Psoas muscle (tissue), 8 donors: ENCODE measurements at regions of chr12 and their contacts with region 1.

Region 1: DNA sequence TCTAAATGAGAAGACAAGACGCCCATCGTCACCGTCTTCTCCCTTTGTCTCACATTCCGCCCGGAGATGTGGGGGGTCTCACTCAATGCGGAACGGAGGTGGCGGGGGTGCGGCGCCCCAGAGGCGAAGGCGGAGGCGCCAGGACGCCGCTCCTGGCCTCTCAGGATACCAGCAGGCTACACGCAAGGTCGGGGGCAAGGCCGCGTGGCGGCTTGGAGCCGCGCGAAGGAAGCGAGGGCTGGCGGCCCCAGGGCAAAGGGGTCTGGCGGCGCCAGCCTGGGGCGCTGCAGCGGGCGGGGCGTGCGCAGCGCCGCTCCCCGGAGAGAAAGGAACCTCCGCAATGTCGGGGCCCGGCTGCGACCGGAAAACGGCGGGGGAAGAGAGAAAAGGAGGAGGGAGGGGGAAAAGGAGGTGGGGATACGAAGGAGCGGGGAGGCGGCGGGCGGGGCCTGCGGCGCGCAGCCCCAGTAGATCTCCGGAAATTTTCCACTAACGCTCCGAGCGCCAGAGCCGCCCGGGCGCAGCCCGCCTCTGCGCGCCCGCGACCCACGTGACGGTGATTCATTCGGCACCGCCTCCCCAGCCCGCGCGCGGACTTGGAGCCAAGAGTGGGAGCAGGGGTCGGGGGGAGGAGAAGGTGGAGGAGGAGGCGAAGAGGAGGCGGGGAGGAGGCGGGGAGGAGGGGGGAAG is 10.5 kb upstream of the SLC38A2 start:
- DNase-seq: peak; percentile 97 to 99
- ATAC-seq: peak; percentile 86 to 92 (median 89)
- H3K4me3 ChIP-seq: peak overlapping the region; percentile 86
- H3K27ac ChIP-seq: peak overlapping the region; percentile 98
- H3K4me1 ChIP-seq: peaks cover 41% of the 10 kb centered on the region
- H3K27me3 ChIP-seq: no peaks in the 10 kb centered on the region
- CTCF ChIP-seq: no peak

Region 2: GRCh38 chr12:45762185-45763110 is 620.7 kb before region 1 on chr12:
- intact Hi-C with region 1: no loop called
- DNase-seq: no peak
- ATAC-seq: peak in 3 of 4 donors; percentile 48 to 68 (median 66)
- H3K4me3 ChIP-seq: no peak overlapping the region
- H3K27ac ChIP-seq: no peak overlapping the region
- H3K4me1 ChIP-seq: peaks cover 14% of the 10 kb centered on the region
- H3K27me3 ChIP-seq: no peaks in the 10 kb centered on the region
- CTCF ChIP-seq: peak; percentile 63

Region 3: GRCh38 chr12:46260151-46260918 is 122.8 kb before region 1 on chr12:
- intact Hi-C with region 1: no loop called
- DNase-seq: no peak
- ATAC-seq: peak in 3 of 4 donors; percentile 35 to 51 (median 38)
- H3K4me3 ChIP-seq: no peak overlapping the region
- H3K27ac ChIP-seq: peak overlapping the region; percentile 13
- H3K4me1 ChIP-seq: peaks cover 23% of the 10 kb centered on the region
- H3K27me3 ChIP-seq: no peaks in the 10 kb centered on the region
- CTCF ChIP-seq: no peak

Region 4: GRCh38 chr12:46372544-46373110 is 10.5 kb before region 1 on chr12 and contains the start of gene SLC38A2:
- intact Hi-C with region 1: loop called in 1 of 2 experiments (anchors 1 kb)
- DNase-seq: peak; percentile 97 to 99
- ATAC-seq: peak; percentile 88 to 93 (median 90)
- H3K4me3 ChIP-seq: peak within 1 kb of the TSS; percentile 94
- H3K27ac ChIP-seq: peak within 1 kb of the TSS; percentile 99
- H3K4me1 ChIP-seq: peaks cover 40% of the 10 kb centered on the region
- H3K27me3 ChIP-seq: no peaks in the 10 kb centered on the region
- CTCF ChIP-seq: no peak
- total RNA-seq, gene SLC38A2: 287 to 428 (median 331) TPM

Region 5: GRCh38 chr12:46406352-46407027 is 23.4 kb after region 1 on chr12:
- intact Hi-C with region 1: no loop called
- DNase-seq: no peak
- ATAC-seq: no peak
- H3K4me3 ChIP-seq: no peak overlapping the region
- H3K27ac ChIP-seq: no peak overlapping the region
- H3K4me1 ChIP-seq: peaks cover 62% of the 10 kb centered on the region
- H3K27me3 ChIP-seq: no peaks in the 10 kb centered on the region
- CTCF ChIP-seq: no peak

Region 6: GRCh38 chr12:46450279-46450748 is 67.2 kb after region 1 on chr12:
- intact Hi-C with region 1: loop called in 1 of 2 experiments (anchors 5 kb)
- DNase-seq: peak; percentile 58 to 86
- ATAC-seq: peak; percentile 55 to 91 (median 82)
- H3K4me3 ChIP-seq: no peak overlapping the region
- H3K27ac ChIP-seq: peak overlapping the region; percentile 74
- H3K4me1 ChIP-seq: peaks cover 57% of the 10 kb centered on the region
- H3K27me3 ChIP-seq: no peaks in the 10 kb centered on the region
- CTCF ChIP-seq: no peak

Region 7: DNA sequence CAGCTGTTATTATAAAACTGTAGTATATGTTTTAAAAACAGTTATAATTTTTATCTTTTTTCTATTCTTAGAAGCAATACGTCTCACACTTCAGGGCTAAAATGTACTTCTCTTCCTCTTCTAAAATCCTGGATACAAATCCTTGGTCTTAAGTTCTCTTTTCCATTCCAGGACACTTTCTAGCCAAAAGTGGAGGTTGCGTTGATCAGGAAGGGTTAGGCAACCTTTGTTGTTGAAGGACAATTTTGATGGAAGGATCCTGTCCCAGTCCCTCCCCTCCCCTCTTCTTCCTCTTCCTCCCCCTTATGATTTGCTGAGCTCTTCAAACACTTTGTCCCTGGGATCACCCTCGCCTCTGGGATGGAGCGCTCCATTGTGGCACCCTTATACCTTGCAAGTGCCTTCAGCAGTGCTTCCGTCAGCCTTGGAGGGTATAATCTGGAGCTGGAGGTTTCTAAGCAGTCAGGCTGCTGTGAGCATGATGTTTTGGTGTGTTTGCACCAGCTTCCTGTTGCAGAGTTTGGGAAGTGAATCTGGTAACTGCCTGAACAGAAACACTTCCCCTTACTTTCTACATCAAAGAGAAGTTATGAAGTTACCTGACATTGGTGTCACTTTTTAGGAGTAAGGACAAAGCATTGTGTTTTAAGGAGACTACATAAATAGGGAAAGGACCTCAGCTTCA is 76.9 kb after region 1 on chr12:
- intact Hi-C with region 1: loop called (anchors 5 kb)
- DNase-seq: no peak
- ATAC-seq: no peak
- H3K4me3 ChIP-seq: no peak overlapping the region
- H3K27ac ChIP-seq: peak overlapping the region; percentile 37
- H3K4me1 ChIP-seq: peaks cover 65% of the 10 kb centered on the region
- H3K27me3 ChIP-seq: no peaks in the 10 kb centered on the region
- CTCF ChIP-seq: no peak

Region 8: DNA sequence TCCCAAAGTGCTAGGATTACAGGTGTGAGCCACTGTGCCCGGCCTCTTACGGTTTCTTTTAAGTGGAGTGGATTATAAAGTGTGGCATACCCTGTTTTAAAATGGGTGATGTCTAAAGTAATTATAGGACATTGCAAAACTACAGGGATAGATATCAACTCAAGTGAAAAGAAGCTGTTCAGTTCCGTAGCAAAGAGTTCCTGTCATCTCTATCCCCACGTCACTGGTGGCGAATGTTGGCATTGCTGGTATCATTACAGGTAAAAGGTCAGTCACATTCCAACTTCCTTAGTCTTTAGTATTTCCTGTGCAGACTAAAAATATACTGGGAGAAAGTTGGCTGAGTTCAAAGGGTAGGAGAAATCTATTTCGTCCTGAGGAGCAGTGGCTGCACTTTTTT is 85.0 kb after region 1 on chr12:
- intact Hi-C with region 1: loop called in 1 of 2 experiments (anchors 5 kb)
- DNase-seq: peak; percentile 55 to 81
- ATAC-seq: peak; percentile 94 to 96 (median 96)
- H3K4me3 ChIP-seq: peak overlapping the region; percentile 4
- H3K27ac ChIP-seq: peak overlapping the region; percentile 74
- H3K4me1 ChIP-seq: peaks cover 53% of the 10 kb centered on the region
- H3K27me3 ChIP-seq: no peaks in the 10 kb centered on the region
- CTCF ChIP-seq: peak; percentile 21

Region 9: GRCh38 chr12:46770501-46771183 is 387.5 kb after region 1 on chr12:
- intact Hi-C with region 1: loop called in 1 of 2 experiments (anchors 10 kb)
- DNase-seq: peak in 1 of 2 donors; percentile 49
- ATAC-seq: peak; percentile 79 to 85 (median 79)
- H3K4me3 ChIP-seq: peak overlapping the region; percentile 25
- H3K27ac ChIP-seq: peak overlapping the region; percentile 84
- H3K4me1 ChIP-seq: peaks cover 51% of the 10 kb centered on the region
- H3K27me3 ChIP-seq: no peaks in the 10 kb centered on the region
- CTCF ChIP-seq: no peak